ENCODE measurements at regions of chr1 and their contacts with region 1.

Region 1: DNA sequence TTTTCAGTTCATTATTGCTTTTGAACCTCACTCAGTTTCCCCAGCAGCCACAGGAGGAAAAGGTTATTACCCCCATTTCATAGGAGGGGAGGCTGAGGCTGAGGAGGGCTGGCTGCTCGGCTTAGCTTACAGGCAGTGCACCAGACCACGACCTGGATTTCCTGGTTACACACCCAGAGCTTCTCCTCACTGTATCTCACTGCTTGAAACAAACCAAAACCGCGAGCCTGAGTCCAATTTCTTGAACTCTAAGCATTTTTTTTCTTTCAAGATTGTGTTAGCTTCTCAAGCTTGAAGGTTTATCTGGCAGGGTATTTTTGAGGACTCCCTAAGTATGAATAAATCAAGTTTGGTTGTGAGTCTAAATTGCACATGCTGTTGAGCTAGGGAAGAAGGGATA is 188.9 kb upstream of the EDN2 start:
- DNase-seq: peak; percentile 90
- H3K4me3 Mint-ChIP-seq: peak overlapping the region; percentile 67
- H3K27ac Mint-ChIP-seq: peak overlapping the region; percentile 80
- H3K4me1 Mint-ChIP-seq: peaks cover 88% of the 10 kb centered on the region
- H3K27me3 Mint-ChIP-seq: no peaks in the 10 kb centered on the region

Region 2: GRCh38 chr1:41728403-41729202 is 55.2 kb after region 1 on chr1:
- intact Hi-C with region 1: loop called (anchors 5 kb)
- DNase-seq: peak; percentile 76
- H3K4me3 Mint-ChIP-seq: peak overlapping the region; percentile 50
- H3K27ac Mint-ChIP-seq: peak overlapping the region; percentile 90
- H3K4me1 Mint-ChIP-seq: peaks cover 47% of the 10 kb centered on the region
- H3K27me3 Mint-ChIP-seq: no peaks in the 10 kb centered on the region

Region 3: DNA sequence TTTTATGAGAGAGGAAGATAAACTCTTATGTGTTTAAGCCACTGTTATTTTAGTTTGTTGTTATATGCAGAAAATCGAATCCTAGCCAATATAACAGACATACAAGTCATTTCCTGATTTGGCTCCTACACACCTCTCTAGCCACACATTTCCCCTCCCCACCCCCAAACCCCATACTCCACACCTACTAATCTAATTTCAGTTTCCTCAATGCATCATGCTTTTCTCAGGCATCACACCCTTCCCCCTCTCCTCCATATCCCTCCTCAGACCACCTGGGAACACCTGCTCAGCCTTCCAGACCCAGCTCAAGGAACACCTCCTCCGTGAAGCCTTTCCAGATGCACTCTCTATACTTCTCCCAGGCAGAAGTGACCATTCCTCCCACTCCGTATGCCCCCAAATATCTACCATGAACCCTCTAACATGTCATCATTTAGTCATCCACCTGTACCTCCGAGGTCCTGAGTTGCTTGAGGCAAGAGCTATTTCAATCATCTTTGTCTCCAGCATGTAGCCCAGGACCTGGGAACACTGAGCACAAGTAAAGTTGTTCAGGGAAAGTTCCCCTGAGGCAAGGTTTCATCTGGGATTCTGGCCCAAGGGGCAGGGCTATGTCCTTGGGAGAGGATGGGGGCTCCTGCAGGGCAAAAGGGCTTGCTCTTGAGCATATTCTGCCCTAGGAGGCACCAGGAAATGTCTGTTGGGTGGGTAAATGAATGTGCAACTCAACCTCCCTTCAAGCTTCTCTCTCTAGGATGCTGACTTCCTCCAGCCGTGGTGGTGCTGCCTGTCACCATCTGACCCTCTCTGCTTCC is 118.5 kb after region 1 on chr1:
- intact Hi-C with region 1: loop called (anchors 5 kb)
- DNase-seq: peak; percentile 74
- H3K4me3 Mint-ChIP-seq: peak overlapping the region; percentile 64
- H3K27ac Mint-ChIP-seq: peak overlapping the region; percentile 75
- H3K4me1 Mint-ChIP-seq: peaks cover 51% of the 10 kb centered on the region
- H3K27me3 Mint-ChIP-seq: no peaks in the 10 kb centered on the region

Region 4: DNA sequence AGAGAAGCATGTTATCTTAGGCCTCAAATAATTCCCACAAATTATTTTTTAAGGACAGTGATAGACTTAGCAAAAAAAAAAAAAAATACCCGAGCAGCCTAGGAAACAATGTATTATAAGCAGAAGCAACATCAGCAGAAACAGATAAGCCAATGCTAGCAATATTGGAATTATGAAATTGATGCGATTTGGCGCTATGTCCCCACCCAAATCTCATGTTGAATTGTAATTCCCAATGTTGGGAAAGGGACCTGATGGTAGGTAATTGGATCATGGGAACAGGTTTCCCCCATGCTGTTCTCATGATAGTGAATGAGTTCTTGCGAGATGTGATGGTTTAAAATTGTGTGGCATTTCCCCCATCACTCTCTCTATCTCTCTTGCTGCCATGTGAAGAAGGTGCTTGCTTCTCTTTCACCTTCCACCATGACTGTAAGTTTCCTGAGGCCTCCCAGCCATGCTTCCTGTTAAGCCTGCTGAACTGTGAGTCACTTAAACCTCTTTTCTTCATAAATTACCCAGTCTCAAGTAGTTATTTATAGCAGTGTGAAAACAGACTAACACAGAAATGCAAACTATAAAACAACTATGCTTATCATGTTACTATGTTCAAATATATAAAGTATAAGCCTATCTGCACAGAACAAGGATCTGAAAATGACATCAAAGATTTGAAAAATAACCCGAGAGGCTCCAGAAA is 321.0 kb after region 1 on chr1:
- intact Hi-C with region 1: no loop called
- DNase-seq: peak; percentile 32
- H3K4me3 Mint-ChIP-seq: no peak overlapping the region
- H3K27ac Mint-ChIP-seq: no peak overlapping the region
- H3K4me1 Mint-ChIP-seq: peaks cover 10% of the 10 kb centered on the region
- H3K27me3 Mint-ChIP-seq: no peaks in the 10 kb centered on the region

Measured in activated CD4-positive, alpha-beta T cell treated with anti-CD3 and anti-CD28 coated beads, Interleukin-2, amount 10 ng/mL, durations not matched to agents 24 days and 14 days (primary cell).